GM13976 (cell line): ENCODE measurements at regions of chr4 and their contacts with region 1.

Region 1: DNA sequence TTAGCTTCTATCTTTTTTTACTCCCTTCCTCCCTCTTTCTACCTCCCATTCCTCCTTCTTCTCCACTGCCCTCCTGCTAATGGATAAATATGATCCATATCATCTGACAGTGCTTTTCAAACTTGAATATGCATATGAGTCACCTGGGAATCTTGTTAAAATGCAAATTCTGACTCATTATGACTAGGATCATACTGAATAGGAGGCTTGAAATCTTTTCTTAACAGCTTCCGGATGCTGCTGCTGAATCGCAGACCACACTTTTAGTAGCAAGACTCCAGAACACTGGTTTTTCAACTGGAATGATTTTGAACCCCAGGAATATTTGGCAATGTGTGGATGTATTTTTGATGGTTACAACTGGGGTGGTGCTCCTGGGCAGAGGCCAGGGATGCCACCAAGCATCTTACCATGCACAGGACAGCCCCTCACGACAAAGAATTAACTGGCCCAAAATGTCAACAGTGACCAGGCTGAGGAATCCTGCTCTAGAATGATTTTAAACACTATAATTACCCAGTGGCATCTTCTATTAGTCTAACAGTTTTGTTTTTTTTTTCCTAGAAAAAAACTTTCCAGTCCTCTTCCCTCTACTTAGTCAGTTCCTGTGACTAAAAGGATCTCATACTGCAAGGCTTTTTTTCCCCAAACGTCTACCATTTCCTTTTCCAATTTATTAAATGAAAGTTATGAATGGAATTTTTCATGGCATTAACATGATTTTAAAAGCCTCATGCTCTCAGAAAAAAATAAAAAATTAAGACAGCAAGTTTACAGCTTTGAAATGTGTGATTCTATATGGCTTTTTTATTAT is 10.6 kb upstream of the PYURF start:
- DNase-seq: no peak
- CTCF ChIP-seq: no peak

Region 2: GRCh38 chr4:88341227-88342192 is 192.6 kb before region 1 on chr4:
- in situ Hi-C with region 1: no loop called
- DNase-seq: no peak
- CTCF ChIP-seq: no peak

Region 3: GRCh38 chr4:88477229-88477860 is 56.8 kb before region 1 on chr4:
- in situ Hi-C with region 1: no loop called
- DNase-seq: no peak
- CTCF ChIP-seq: no peak

Region 4: GRCh38 chr4:88659055-88659889 is 125.1 kb after region 1 on chr4:
- in situ Hi-C with region 1: loop called (anchors 5 kb)
- DNase-seq: peak; percentile 40
- CTCF ChIP-seq: peak; percentile 59

Region 5: GRCh38 chr4:89024051-89024675 is 490.0 kb after region 1 on chr4:
- in situ Hi-C with region 1: loop called (anchors 10 kb)
- DNase-seq: peak; percentile 60
- CTCF ChIP-seq: peak; percentile 51